Breast epithelium (tissue), 4 donors: ENCODE measurements at regions of chr17 and their contacts with region 1.

Region 1: DNA sequence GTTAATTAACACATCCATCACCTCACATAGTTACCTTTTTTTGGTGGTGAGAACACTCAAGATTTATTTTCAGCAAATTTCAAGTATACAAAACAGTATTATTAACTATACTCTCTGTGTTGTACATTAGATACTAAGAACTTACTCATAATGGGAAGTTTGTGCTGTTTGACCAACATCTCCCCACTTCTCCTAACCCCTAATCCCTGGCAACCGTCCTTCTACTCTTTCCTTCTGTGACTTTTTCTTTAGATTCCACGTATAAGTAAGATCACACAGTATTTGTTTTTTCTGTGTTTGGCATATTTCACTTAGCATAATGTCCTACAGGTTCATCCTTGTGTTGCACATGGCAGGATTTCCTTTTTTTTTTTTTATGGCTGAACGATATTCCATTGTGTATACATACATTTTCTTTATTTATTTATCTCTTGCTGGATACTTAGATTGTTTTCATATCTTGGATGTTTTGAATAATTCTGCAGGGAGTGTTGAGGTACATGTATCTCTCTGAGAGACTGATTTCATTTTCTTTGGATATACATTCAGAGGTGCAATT is 18.9 kb downstream of the PPM1D start:
- DNase-seq: no peak
- H3K4me3 ChIP-seq: no peak overlapping the region
- H3K27ac ChIP-seq: no peak overlapping the region
- H3K4me1 ChIP-seq: no peaks in the 10 kb centered on the region
- H3K27me3 ChIP-seq: no peaks in the 10 kb centered on the region
- CTCF ChIP-seq: no peak
- POLR2A ChIP-seq: no peak

Region 2: DNA sequence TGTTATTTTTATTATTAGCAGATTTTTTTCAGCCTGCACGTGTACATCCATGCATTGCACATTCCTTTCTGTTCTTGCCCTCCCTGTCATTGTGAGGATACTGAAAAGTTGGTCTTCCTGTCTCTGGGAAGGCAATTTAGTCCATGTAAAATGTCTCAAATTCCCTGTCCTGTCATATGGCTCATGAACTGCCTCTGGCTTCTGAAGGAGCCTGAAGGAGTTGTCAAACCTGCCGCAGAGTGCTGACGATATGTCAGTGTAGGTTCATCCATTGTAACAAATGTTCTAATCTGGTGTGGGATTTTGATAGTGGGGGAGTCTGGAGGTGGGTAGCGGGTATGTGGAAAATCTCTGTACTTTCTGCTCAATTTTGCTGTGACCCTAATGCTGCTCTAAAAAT is 1227.9 kb before region 1 on chr17:
- intact Hi-C with region 1: loop called (anchors 5 kb)
- DNase-seq: no peak
- H3K4me3 ChIP-seq: no peak overlapping the region
- H3K27ac ChIP-seq: no peak overlapping the region
- H3K4me1 ChIP-seq: no peaks in the 10 kb centered on the region
- H3K27me3 ChIP-seq: no peaks in the 10 kb centered on the region
- CTCF ChIP-seq: no peak
- POLR2A ChIP-seq: no peak

Region 3: DNA sequence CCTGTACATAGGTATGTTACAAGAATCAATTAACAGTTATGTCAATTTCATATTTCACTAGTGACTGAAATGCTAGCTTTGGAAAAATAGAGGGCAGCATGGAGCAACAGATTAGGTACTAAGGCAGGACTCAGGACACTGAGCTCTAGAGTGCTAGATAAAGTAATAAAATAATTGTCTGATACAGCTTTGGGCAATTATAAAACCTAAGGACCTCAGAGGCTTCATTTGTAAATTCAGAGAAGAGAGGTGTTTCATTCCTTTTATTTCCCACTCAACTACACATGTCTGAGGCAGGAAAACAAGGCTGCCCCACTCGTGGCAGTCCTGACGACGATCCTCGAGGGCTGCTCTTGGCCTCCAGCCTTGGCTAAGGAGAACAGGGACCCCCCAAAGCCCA is 387.7 kb before region 1 on chr17:
- intact Hi-C with region 1: no loop called
- DNase-seq: no peak
- H3K4me3 ChIP-seq: no peak overlapping the region
- H3K27ac ChIP-seq: no peak overlapping the region
- H3K4me1 ChIP-seq: no peaks in the 10 kb centered on the region
- H3K27me3 ChIP-seq: no peaks in the 10 kb centered on the region
- CTCF ChIP-seq: peak in 2 of 3 donors; percentile 24 to 39
- POLR2A ChIP-seq: no peak

Region 4: DNA sequence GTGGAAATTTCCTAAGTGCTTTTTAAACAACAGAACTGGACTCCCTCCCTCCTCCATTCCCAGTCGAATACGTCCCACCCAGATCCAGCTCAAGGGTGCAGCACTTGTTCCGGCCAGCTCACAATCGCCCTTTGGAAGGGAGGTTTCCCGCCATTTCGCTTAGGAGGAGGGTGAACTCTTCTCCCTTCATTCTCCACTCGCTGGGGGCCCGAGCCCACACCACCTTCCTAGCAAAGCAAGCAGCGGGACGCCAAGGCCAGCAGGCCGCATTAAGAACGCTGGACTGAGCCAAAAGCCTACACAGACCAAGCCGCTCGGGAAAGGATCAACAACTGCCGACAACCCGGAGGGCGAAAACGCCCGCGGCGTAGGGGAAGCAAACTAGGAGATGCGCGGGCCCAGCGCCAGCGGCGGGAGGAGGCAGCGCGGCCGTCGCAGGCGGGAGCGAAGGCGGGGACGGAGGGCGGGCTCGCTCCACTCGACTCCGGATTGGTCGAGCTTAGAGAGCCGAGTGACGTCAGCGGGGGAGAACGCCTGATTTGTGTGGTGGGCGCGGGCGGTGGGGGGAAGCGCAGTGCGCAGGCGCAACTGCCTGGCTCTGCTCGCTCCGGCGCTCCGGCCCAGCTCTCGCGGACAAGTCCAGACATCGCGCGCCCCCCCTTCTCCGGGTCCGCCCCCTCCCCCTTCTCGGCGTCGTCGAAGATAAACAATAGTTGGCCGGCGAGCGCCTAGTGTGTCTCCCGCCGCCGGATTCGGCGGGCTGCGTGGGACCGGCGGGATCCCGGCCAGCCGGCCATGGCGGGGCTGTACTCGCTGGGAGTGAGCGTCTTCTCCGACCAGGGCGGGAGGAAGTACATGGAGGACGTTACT is 19.1 kb before region 1 on chr17 and contains the start of gene PPM1D:
- intact Hi-C with region 1: no loop called
- DNase-seq: peak; percentile 99
- H3K4me3 ChIP-seq: peak within 1 kb of the TSS; percentile 90 to 97 (median 92)
- H3K27ac ChIP-seq: peak within 1 kb of the TSS; percentile 90 to 98
- H3K4me1 ChIP-seq: peaks cover 0 to 4% of the 10 kb centered on the region in 2 donors
- H3K27me3 ChIP-seq: no peaks in the 10 kb centered on the region
- CTCF ChIP-seq: peak; percentile 16 to 41 (median 32)
- POLR2A ChIP-seq: peak; percentile 88
- total RNA-seq, gene PPM1D: 12.3 to 19.6 (median 14.7) TPM